Gastrocnemius medialis (tissue), 4 donors: ENCODE measurements at regions of chr7 and their contacts with region 1.

Region 1: DNA sequence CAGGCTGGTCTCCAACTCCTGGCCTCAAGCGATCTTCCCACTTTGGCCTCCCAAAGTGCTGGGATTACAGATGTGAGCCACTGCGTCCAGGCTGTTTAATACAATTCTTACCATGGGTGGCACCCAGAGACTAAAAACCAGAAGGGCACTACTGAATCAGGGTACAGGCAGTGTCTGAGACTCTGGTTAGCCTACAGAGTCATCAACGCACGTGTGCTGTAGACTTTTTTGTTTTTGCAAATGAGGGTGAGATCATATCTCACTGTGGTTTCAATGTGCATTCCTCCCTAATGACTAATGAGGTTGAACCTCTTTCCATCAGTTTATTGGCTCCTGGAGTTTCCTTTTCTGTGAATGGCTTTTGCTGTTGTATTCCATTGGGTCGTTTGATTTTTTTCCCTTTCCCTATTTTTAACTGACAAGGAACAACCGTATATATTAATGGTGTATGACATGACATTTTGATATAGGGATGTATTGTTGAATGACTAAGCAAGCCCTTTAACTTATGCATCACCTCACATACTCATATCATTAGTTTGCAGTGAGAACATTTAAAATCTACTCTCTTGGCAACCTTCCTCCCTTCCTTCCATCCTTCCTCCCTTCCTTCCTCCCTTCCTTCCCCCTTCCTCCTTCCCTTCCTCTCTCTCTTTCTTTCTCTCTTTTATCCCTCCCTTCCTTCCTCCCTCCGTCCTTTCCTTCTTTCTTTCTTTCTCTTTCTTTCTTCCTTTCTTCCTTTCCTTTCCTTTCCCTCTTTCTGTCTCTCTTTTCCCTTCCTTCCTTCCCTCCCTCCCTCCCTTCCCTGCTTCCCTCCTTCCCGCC is 9.3 kb upstream of the METTL27 start:
- DNase-seq: no peak
- ATAC-seq: peak; percentile 34 to 87
- H3K4me3 ChIP-seq: no peak overlapping the region
- H3K27ac ChIP-seq: peak overlapping the region; percentile 27 to 56 (median 42)
- H3K4me1 ChIP-seq: no peaks in the 10 kb centered on the region
- H3K27me3 ChIP-seq: peaks cover 0 to 5% (median 0%) of the 10 kb centered on the region in 3 donors
- CTCF ChIP-seq: no peak
- POLR2A ChIP-seq: no peak

Region 2: DNA sequence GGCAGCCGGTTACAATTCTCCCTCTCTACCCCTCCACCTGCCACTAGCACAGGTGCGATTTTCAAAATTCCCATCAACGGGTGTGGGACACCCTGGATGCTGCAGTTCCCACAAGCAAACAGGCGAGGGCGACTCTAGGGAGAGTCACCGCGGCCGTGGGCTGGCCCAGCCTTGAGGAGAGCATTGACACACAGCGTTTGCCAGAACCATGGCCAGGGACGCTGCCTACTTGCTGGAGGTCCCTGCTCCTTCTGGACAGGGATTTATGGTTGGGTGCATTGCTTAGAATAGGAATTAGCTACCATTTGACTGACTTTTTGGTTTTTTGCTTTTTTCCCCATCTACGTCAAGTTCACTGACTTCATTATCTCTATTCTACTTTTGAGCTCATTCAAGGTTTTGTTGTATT is 39.9 kb before region 1 on chr7:
- in situ Hi-C with region 1: loop called in 3 of 4 experiments (anchors 5 kb)
- intact Hi-C with region 1: loop called (anchors 1 kb)
- DNase-seq: peak; percentile 31 to 41
- ATAC-seq: peak; percentile 42 to 58
- H3K4me3 ChIP-seq: no peak overlapping the region
- H3K27ac ChIP-seq: no peak overlapping the region
- H3K4me1 ChIP-seq: no peaks in the 10 kb centered on the region
- H3K27me3 ChIP-seq: peaks cover 0 to 11% (median 0%) of the 10 kb centered on the region in 3 donors
- CTCF ChIP-seq: peak; percentile 47 to 81 (median 63)
- POLR2A ChIP-seq: no peak